HEK293 (cell line): ENCODE measurements at regions of chrX and their contacts with region 1.

Region 1: DNA sequence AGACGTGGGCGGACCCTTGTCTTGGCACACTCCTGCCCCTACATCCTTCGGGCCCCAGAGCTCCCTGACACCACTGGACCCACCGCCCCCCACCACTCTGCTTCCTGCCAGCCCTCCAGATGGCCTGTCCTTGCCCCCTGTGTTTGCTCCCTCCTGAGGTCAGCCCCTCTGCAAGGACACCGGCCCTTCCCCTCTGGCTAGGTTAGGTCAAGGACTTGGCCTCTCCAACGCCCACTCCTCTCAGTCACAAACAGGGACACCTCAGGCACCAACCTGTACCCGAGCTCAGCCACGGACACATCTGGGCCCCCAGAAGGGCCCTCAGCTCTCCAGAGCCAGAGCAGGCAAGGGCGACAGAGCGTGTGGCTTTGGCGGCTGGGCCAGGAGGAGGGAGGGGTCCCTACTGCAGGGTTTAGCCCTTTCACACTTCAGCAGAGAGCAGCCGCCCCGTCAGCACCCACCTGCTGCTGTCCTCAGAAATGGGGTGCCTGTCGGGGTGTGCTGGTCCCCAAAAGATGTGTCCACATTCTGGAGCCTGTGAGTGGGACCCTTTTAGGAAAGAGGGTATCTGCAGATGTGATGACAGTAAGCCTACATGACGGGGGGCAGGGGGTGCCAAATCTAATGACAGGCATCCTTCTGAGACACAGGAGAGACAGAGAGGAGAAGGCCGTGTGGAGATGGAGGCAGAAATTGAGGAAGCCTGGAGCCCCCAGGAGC is 23.5 kb upstream of the DUSP9 start:
- H3K4me3 ChIP-seq: no peak overlapping the region
- H3K27ac ChIP-seq: no peak overlapping the region
- H3K4me1 ChIP-seq: no peaks in the 10 kb centered on the region
- CTCF ChIP-seq: no peak

Region 2: DNA sequence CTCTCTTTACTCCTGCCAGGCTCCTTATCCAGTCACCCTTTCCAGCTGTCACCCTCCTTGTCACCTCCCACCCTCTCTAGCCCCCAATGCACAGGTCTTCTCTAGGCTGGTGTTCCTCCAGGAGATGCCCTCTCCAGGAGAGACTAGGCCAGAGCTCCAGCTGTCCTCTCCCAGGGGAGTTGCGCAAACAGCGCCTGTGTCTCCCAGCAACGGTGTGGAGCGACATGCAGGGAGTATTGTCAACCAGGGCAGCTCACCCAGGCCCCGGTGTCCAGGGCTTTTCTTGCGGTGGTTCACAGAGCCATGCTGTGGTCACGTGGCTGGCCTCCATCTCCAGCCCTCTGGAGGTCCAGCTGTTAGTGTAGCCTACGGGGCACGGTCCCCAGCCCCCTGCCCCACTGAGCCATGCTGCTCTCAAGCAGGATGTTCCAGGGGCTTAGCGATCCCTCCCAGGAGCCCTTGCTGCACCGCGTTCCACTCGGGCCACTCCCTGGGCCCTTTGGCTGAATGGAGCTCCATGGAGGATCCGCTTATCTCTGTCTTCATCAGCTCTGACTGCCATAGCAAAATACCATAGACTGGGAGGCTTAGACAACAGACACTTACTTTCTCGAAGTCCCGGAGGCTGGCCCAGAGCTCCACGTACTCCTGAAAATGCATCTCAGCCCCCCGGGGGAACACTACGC is 59.3 kb before region 1 on chrX:
- CTCF ChIA-PET with region 1: no interaction called
- POLR2A ChIA-PET with region 1: no interaction called
- H3K4me3 ChIP-seq: no peak overlapping the region
- H3K27ac ChIP-seq: no peak overlapping the region
- H3K4me1 ChIP-seq: no peaks in the 10 kb centered on the region
- CTCF ChIP-seq: no peak

Region 3: DNA sequence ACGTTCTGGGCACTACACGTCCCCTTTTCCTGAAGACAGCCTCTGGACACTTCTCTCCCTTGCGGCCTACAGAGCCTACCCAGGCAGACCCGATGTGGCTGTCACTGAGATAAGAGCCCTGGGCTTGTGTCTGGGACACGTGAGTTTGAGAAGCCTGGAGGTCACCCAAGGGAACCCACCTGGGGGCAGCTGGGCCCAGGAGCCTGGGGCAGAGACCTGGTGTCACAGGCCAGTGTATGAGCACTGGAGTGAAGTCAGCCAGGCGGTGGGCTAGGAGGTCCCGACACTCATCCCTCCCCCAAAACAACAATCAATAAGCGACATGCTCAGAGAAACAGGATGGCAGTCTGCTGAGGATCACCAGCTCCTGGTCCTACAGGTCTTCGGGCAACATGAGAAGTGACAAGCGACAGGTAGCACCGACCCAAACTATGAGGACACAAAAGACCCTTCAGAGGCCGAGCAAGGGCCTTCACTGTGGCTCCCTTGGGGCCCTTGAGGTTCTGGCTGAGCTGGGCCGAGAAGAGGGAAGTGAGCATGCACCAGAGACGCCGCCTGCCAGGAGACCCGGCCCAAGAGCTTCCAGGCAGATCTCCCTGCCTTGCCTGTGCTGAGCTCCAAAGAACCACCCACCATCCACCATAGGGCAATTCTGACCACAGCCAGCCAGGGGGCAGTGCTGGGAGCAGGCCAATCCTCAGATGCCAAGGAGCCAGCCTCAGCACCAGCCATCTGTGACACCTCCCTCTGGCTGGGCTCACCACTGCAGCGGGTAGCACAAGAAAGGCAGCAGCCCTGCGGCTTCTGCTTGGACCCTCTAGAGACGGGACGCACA is 12.5 kb after region 1 on chrX:
- CTCF ChIA-PET with region 1: interaction called, 10 read pairs
- POLR2A ChIA-PET with region 1: no interaction called
- H3K4me3 ChIP-seq: no peak overlapping the region
- H3K27ac ChIP-seq: no peak overlapping the region
- H3K4me1 ChIP-seq: no peaks in the 10 kb centered on the region
- CTCF ChIP-seq: peak; percentile 73

Region 4: GRCh38 chrX:153687121-153688039 is 63.9 kb after region 1 on chrX and contains the start of gene SLC6A8:
- CTCF ChIA-PET with region 1: no interaction called
- POLR2A ChIA-PET with region 1: no interaction called
- H3K4me3 ChIP-seq: peak within 1 kb of the TSS; percentile 57
- H3K27ac ChIP-seq: peak within 1 kb of the TSS; percentile 73; the same call in 1 of the 2 replicates
- H3K4me1 ChIP-seq: no peaks in the 10 kb centered on the region
- CTCF ChIP-seq: no peak; the same call in 1 of the 2 replicates

Region 5: DNA sequence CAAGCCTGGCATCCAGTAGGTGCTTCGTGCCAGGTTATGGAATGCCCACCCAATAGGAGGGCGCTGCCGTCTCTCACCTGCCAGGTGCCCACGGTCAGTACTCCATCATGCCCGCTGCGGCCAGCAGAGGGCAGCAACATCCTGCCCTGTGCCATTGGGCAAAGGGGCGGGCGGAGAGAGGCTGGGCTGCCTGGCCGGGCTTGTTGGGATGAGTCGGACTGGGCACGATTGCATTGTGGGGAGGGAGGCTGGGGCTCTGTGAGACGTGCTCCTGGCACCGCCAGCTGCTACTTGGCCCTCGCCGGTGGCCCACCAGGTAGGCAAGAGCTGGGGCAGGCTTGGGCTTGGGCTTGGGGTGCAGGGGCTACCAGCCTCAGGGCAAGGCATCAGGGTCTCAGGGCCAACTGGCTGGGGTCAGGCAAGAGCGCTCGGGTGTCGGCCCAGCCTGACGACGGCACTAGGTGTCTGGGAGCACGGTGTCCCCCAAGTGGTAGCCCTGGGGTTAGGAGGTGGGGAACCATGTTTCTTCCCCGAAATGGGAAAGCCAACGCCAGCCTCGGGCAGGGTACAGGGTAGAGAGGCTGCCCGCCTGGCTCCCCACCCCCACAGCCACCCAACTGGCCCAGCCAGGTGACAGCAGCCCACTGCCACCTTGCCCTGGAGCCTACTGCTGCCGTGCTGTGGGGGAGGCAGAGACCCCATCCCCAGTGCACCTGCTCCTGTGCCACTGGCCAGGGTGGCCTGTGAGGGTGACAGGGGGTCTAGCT is 140.7 kb after region 1 on chrX and contains the start of gene PLXNB3:
- CTCF ChIA-PET with region 1: no interaction called
- POLR2A ChIA-PET with region 1: no interaction called
- H3K4me3 ChIP-seq: no peak within 1 kb of the TSS
- H3K27ac ChIP-seq: no peak within 1 kb of the TSS
- H3K4me1 ChIP-seq: 0 out of 2 replicates have a peak, but pooled peaks cover 3% of the 10 kb centered on the region
- CTCF ChIP-seq: peak; percentile 87